ENCODE measurements at regions of chr18 and their contacts with region 1.

Region 1: DNA sequence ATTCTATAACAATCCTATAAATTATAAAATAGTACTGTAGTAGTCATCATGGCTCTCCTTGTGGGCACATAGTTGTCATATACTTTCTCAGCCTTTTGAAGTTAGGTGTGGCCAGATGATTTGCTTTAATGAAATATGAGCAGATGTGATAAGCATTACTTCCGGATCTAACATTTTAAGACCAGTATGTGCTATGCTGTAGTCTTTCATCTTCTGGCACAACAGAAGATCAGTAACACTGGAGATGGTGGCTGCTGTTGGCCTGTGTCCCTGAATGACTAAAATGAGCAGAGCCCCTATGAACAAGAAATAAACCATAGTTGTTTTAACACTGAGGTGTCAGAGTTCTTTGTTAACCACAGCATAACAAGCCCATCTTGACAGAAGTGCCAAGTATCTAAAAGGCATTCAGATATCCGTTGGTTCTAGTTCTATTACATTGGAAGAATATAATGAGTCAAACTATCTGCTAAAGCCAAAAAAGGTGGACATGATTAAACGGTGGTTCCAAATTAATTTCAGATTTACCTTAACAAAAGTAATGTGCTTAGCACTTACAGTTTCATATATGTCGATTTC is 6.3 kb downstream of the MEX3C start:
- DNase-seq: peak; percentile 43 to 72
- ATAC-seq: peak; percentile 71 to 85 (median 77)
- H3K4me3 ChIP-seq: no peak overlapping the region
- H3K4me3 Mint-ChIP-seq: peak overlapping the region; percentile 84
- H3K27ac ChIP-seq: peak overlapping the region; percentile 80
- H3K27ac Mint-ChIP-seq: peak overlapping the region; percentile 93 to 97
- H3K4me1 ChIP-seq: peaks cover 22% of the 10 kb centered on the region
- H3K4me1 Mint-ChIP-seq: peaks cover 75 to 90% of the 10 kb centered on the region in 2 donors
- H3K27me3 ChIP-seq: no peaks in the 10 kb centered on the region
- H3K27me3 Mint-ChIP-seq: no peaks in the 10 kb centered on the region
- CTCF ChIP-seq: no peak

Region 2: DNA sequence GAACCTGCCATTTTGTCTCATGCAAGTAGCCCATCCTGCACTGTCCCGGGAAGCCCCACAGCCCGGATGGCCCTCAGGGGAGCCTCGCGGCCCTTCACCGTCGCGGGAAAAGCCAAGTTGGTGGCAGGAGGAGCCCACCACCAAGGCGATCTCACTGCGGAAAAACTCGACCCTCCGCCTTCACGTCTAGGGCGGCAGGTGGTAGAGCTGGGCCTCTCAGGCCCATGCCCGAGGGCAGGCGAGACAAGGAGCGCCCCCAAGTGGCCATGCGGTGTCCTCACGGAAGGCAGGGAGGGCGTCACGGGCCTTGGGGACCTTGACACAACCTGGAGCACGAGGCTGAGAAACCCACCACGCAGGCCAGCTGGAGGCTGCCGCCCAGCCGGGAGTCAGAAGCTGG is 851.1 kb before region 1 on chr18:
- intact Hi-C with region 1: no loop called
- DNase-seq: no peak
- ATAC-seq: no peak
- H3K4me3 ChIP-seq: no peak overlapping the region
- H3K4me3 Mint-ChIP-seq: no peak overlapping the region
- H3K27ac ChIP-seq: no peak overlapping the region
- H3K27ac Mint-ChIP-seq: no peak overlapping the region
- H3K4me1 ChIP-seq: no peaks in the 10 kb centered on the region
- H3K4me1 Mint-ChIP-seq: no peaks in the 10 kb centered on the region
- H3K27me3 ChIP-seq: no peaks in the 10 kb centered on the region
- H3K27me3 Mint-ChIP-seq: peaks cover 5 to 21% of the 10 kb centered on the region in 2 donors
- CTCF ChIP-seq: no peak

Region 3: GRCh38 chr18:51128533-51128932 is 62.7 kb before region 1 on chr18:
- intact Hi-C with region 1: no loop called
- DNase-seq: no peak
- ATAC-seq: no peak
- H3K4me3 ChIP-seq: no peak overlapping the region
- H3K4me3 Mint-ChIP-seq: no peak overlapping the region
- H3K27ac ChIP-seq: no peak overlapping the region
- H3K27ac Mint-ChIP-seq: no peak overlapping the region
- H3K4me1 ChIP-seq: no peaks in the 10 kb centered on the region
- H3K4me1 Mint-ChIP-seq: peaks cover 13 to 23% of the 10 kb centered on the region in 2 donors
- H3K27me3 ChIP-seq: no peaks in the 10 kb centered on the region
- H3K27me3 Mint-ChIP-seq: no peaks in the 10 kb centered on the region
- CTCF ChIP-seq: no peak

Region 4: DNA sequence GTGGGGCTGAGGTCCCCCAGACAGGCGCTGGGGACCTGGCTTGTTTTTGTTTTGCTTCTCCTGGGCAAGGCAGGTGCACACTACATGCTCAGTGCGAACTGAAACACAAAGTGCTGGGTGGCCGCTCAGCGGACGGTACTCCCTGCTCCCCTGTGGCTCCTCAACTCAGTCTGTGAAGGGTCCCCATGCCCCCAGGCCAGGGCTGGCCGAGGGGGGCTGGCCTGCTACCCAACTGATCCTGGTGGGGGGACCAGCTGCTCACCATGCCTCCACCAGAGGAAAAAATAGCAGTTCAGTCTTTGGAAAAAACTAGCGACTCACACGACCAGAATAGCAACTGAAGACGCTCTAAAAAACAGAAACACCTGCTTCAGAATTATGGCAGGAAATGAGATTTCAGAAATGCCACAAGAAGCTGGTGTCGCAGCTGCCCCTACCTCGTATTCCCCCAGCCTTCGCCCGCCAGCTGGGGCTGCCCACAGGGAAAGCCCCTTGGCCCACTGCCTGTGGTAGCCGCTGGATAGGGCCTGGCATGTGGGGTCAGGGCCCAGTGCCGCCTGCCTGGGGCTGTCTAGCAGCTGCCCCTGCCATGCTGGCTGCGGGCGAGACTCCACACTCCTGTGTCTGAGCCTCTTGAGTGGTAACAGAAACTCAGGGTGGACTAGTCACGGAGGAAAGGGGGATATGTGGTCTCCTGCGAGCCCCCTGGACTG is 37.4 kb before region 1 on chr18:
- intact Hi-C with region 1: loop called (anchors 1 kb)
- DNase-seq: peak; percentile 73 to 74
- ATAC-seq: peak; percentile 63 to 80 (median 75)
- H3K4me3 ChIP-seq: peak overlapping the region; percentile 33
- H3K4me3 Mint-ChIP-seq: peak overlapping the region; percentile 81
- H3K27ac ChIP-seq: peak overlapping the region; percentile 92
- H3K27ac Mint-ChIP-seq: peak overlapping the region; percentile 97 to 99
- H3K4me1 ChIP-seq: peaks cover 59% of the 10 kb centered on the region
- H3K4me1 Mint-ChIP-seq: peaks cover 51 to 55% of the 10 kb centered on the region in 2 donors
- H3K27me3 ChIP-seq: no peaks in the 10 kb centered on the region
- H3K27me3 Mint-ChIP-seq: no peaks in the 10 kb centered on the region
- CTCF ChIP-seq: no peak

Region 5: GRCh38 chr18:51168960-51169662 is 22.1 kb before region 1 on chr18:
- intact Hi-C with region 1: loop called (anchors 1 kb)
- DNase-seq: peak; percentile 37 to 38
- ATAC-seq: peak; percentile 63 to 75 (median 70)
- H3K4me3 ChIP-seq: no peak overlapping the region
- H3K4me3 Mint-ChIP-seq: peak overlapping the region; percentile 61
- H3K27ac ChIP-seq: peak overlapping the region; percentile 57
- H3K27ac Mint-ChIP-seq: peak overlapping the region; percentile 90 to 94
- H3K4me1 ChIP-seq: peaks cover 37% of the 10 kb centered on the region
- H3K4me1 Mint-ChIP-seq: peaks cover 79 to 83% of the 10 kb centered on the region in 2 donors
- H3K27me3 ChIP-seq: no peaks in the 10 kb centered on the region
- H3K27me3 Mint-ChIP-seq: no peaks in the 10 kb centered on the region
- CTCF ChIP-seq: no peak

Measured in natural killer cell (primary cell).